HepG2 (cell line): ENCODE measurements at regions of chr11 and their contacts with region 1.

Region 1: DNA sequence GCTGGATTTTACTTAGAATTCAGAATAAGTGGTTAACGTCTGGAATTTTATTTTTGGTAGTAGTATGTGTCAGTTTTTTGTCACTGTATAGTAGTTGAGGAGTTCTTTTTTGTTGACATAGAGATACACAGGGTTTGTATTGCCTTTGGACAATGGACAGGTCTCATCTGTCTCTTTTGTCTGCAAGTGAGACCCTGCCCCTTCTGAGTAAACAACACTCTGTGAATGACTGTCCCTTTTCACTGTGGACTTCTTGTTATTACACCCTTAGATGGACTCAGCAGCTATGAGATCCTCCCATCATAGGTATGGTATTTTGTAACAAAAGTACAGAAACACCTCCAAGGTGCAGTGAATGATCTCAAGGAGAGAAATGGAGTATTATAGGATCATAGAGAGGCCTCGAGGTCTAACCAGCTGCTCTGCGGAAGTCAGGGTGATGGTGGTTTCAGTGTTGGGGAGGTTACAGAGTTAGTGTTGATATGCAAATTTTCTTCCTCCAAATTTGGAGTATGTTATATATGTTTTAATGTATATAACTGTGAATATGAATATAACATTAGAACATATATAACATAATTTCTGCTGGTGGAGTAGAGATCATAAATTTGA is 7.8 kb downstream of the PPP6R3 start:
- DNase-seq: peak; percentile 77
- ATAC-seq: peak; percentile 62
- H3K4me3 ChIP-seq: no peak overlapping the region
- H3K27ac ChIP-seq: peak overlapping the region; percentile 12
- H3K4me1 ChIP-seq: peaks cover 63% of the 10 kb centered on the region
- H3K27me3 ChIP-seq: no peaks in the 10 kb centered on the region
- CTCF ChIP-seq: no peak
- EP300 ChIP-seq: no peak
- POLR2A ChIP-seq: peak in 1 of 2 experiments; percentile 44; a peak in 1 of 4 replicates
- RAD21 ChIP-seq: no peak

Region 2: GRCh38 chr11:68532727-68533369 is 64.5 kb after region 1 on chr11:
- CTCF ChIA-PET with region 1: no interaction called
- POLR2A ChIA-PET with region 1: no interaction called
- in situ Hi-C with region 1: no loop called
- intact Hi-C with region 1: loop called (anchors 5 kb)
- DNase-seq: peak; percentile 80
- ATAC-seq: peak; percentile 96
- H3K4me3 ChIP-seq: no peak overlapping the region; a peak in 2 of 6 replicates
- H3K27ac ChIP-seq: peak overlapping the region; percentile 73
- H3K4me1 ChIP-seq: peaks cover 29% of the 10 kb centered on the region
- H3K27me3 ChIP-seq: no peaks in the 10 kb centered on the region
- CTCF ChIP-seq: no peak
- EP300 ChIP-seq: 0 out of 4 replicates have a peak, but pooled peaks of 1 of the 2 experiments have one; percentile 8
- POLR2A ChIP-seq: no peak
- RAD21 ChIP-seq: no peak